ENCODE measurements at regions of chr1 and their contacts with region 1.

Region 1: GRCh38 chr1:65605621-65606020 is 185.2 kb downstream of the LEPR start:
- DNase-seq: no peak
- ATAC-seq: no peak
- H3K4me3 ChIP-seq: no peak overlapping the region
- H3K27ac ChIP-seq: no peak overlapping the region
- H3K4me1 ChIP-seq: peaks cover 0 to 17% (median 0%) of the 10 kb centered on the region in 12 donors
- H3K27me3 ChIP-seq: no peaks in the 10 kb centered on the region
- CTCF ChIP-seq: no peak
- POLR2A ChIP-seq: no peak

Region 2: GRCh38 chr1:65221638-65222339 is 383.8 kb before region 1 on chr1:
- intact Hi-C with region 1: no loop called
- DNase-seq: no peak
- ATAC-seq: no peak
- H3K4me3 ChIP-seq: no peak overlapping the region
- H3K27ac ChIP-seq: no peak overlapping the region
- H3K4me1 ChIP-seq: no peaks in the 10 kb centered on the region
- H3K27me3 ChIP-seq: no peaks in the 10 kb centered on the region
- CTCF ChIP-seq: no peak
- POLR2A ChIP-seq: no peak

Region 3: GRCh38 chr1:65254319-65255034 is 351.1 kb before region 1 on chr1:
- intact Hi-C with region 1: loop called in 1 of 10 experiments (anchors 10 kb)
- DNase-seq: peak; percentile 75 to 90 (median 83)
- ATAC-seq: peak; percentile 63 to 97 (median 92)
- H3K4me3 ChIP-seq: peak overlapping the region; percentile 69 to 99 (median 80)
- H3K27ac ChIP-seq: peak overlapping the region in 9 of 12 donors; percentile 24 to 82 (median 65)
- H3K4me1 ChIP-seq: peaks cover 0 to 28% (median 10%) of the 10 kb centered on the region in 12 donors
- H3K27me3 ChIP-seq: peaks cover 0 to 15% (median 0%) of the 10 kb centered on the region in 9 donors
- CTCF ChIP-seq: peak in 6 of 12 donors; percentile 18 to 50 (median 27)
- POLR2A ChIP-seq: no peak

Region 4: DNA sequence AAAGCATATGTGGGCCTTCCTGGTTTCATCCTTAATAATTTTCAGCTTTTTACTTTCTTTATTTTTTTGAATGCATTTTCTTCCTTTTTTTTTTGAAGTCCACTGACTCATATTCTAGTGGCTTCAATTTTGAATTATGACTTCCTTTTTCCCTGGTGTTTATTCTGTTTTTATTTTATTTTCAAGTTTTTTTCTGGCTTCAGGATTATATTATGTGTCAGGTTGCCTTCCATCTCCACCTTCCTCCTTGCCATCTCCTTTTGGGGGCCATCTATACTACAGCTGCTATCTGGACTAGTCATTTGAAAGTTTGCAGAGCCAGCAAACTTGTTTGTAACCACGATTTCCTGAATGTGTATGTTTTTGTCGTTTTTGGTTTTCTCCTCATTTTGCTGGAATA is 67.5 kb before region 1 on chr1:
- intact Hi-C with region 1: no loop called
- DNase-seq: no peak
- ATAC-seq: no peak
- H3K4me3 ChIP-seq: no peak overlapping the region
- H3K27ac ChIP-seq: no peak overlapping the region
- H3K4me1 ChIP-seq: peaks cover 0 to 9% (median 0%) of the 10 kb centered on the region in 12 donors
- H3K27me3 ChIP-seq: no peaks in the 10 kb centered on the region
- CTCF ChIP-seq: no peak
- POLR2A ChIP-seq: no peak

Region 5: DNA sequence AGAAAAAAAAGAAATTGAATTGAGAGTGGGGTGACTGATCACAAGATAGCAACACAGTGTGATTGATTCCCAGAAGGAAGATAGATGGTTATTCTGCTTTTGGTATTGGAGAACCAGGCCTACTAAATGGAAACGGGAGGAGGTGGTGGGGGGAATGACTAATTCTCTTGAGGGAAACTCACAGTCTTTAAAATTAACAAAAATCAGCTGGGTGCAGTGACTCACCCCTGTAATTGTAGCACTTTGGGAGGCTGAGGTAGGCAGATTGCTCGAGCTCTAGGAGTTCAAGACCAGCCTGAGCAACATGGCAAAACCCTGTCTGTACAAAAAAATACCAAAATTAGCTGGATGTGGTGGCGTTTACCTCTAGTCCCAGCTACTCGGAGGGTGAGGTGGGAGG is 52.5 kb after region 1 on chr1:
- intact Hi-C with region 1: no loop called
- DNase-seq: no peak
- ATAC-seq: no peak
- H3K4me3 ChIP-seq: no peak overlapping the region
- H3K27ac ChIP-seq: no peak overlapping the region
- H3K4me1 ChIP-seq: no peaks in the 10 kb centered on the region
- H3K27me3 ChIP-seq: no peaks in the 10 kb centered on the region
- CTCF ChIP-seq: no peak
- POLR2A ChIP-seq: no peak